ENCODE measurements at regions of chr1 and their contacts with region 1.

Region 1: DNA sequence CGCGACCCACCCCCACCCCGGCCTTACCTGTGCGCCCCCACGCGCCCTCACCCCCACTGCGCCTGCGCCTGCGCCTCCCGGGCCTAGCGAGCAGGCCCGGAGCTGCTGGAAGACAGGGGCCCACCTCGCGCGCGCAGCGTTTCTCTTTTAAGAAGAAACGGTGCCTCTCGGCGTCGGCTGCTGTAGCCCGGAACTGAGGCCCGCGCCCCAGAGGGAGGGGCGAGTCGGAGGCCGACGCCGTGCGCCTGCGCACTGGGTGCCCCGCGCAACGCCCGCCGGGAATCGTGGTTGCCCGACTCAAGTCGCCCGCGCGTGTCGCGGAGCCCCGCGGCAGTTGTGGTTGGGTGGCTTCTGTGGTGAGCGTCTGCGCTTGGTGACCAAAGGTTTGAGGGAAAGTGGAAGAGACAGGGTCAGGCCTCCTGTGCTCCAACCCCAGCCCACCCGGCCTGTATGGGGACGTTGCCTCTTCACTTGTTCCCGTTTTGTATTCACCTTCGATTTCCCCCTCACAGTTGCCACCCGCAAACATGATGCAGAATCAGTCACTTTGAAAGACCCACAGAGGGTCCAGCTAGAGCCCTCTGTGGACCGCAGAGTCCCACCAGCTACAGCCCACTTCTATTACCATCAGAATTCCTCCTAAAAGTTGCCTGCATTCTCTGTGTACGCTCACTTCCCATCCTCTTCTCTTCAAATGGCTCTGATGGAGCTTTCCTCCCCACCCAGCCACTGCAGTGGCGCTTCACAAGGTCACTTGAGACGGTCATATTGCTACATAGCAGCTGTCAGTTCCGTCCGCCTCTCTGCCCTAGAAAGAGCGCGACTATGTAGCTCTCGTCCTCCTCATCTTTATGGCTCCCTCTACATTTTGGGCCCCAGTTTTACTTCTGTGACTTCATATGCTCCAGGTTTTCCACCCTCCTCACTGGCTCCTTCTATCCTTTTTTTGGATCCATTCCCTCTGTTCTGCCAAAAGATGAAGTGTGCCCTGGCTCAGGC is at the start of gene ZNF692:
- DNase-seq: peak; percentile 97
- H3K4me3 ChIP-seq: peak within 1 kb of the TSS; percentile 71
- H3K4me3 Mint-ChIP-seq: peak within 1 kb of the TSS; percentile 91
- H3K27ac Mint-ChIP-seq: peak within 1 kb of the TSS; percentile 87
- H3K4me1 ChIP-seq: peaks cover 25% of the 10 kb centered on the region
- H3K4me1 Mint-ChIP-seq: peaks cover 16% of the 10 kb centered on the region
- H3K27me3 ChIP-seq: no peaks in the 10 kb centered on the region
- H3K27me3 Mint-ChIP-seq: no peaks in the 10 kb centered on the region
- CTCF ChIP-seq: no peak
- total RNA-seq, gene ZNF692: 48.5 and 58.4 TPM in 2 replicates

Region 2: DNA sequence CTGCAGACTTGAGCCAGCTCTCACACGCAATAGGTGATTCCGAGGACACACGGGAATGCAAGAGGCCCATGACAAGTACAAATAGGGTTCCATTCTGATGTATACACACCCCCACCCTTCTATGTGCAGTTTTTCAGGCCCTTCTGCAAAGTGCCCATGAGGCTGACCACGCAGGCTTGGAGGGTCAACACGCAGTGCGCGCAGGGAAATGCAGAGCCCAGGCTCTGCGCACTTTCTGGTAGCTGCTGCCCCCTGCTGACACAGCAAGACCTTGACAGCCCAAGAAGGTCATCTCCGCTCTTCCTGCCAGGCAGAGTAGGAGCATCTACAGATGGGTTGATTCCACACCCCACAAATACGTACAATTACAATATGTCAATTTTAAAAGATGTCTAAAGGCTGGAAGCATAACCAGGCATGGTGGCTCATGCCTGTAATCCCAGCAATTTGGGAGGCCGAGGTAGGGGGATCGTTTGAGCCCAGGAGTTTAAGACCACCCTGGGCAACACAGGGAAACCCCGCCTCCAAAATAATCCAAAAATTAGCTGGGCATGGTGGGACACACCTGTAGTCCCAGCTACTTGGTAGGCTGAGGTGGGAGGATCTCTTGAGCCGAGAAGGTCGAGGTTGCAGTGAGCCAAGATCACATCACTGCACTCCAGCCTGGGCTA is 52.0 kb before region 1 on chr1:
- CTCF ChIA-PET with region 1: no interaction called
- POLR2A ChIA-PET with region 1: no interaction called
- intact Hi-C with region 1: no loop called
- DNase-seq: peak; percentile 64 to 65
- H3K4me3 ChIP-seq: no peak overlapping the region
- H3K4me3 Mint-ChIP-seq: no peak overlapping the region
- H3K27ac Mint-ChIP-seq: no peak overlapping the region
- H3K4me1 ChIP-seq: no peaks in the 10 kb centered on the region
- H3K4me1 Mint-ChIP-seq: peaks cover 7% of the 10 kb centered on the region
- H3K27me3 ChIP-seq: no peaks in the 10 kb centered on the region
- H3K27me3 Mint-ChIP-seq: no peaks in the 10 kb centered on the region
- CTCF ChIP-seq: peak; percentile 72 to 82

Region 3: GRCh38 chr1:248849152-248849551 is 10.0 kb before region 1 on chr1:
- CTCF ChIA-PET with region 1: no interaction called
- POLR2A ChIA-PET with region 1: no interaction called
- intact Hi-C with region 1: no loop called
- DNase-seq: no peak
- H3K4me3 ChIP-seq: no peak overlapping the region
- H3K4me3 Mint-ChIP-seq: no peak overlapping the region
- H3K27ac Mint-ChIP-seq: no peak overlapping the region
- H3K4me1 ChIP-seq: no peaks in the 10 kb centered on the region
- H3K4me1 Mint-ChIP-seq: no peaks in the 10 kb centered on the region
- H3K27me3 ChIP-seq: no peaks in the 10 kb centered on the region
- H3K27me3 Mint-ChIP-seq: no peaks in the 10 kb centered on the region
- CTCF ChIP-seq: no peak

Region 4: GRCh38 chr1:248873409-248873992 is 14.3 kb after region 1 on chr1:
- CTCF ChIA-PET with region 1: interaction called, 19 read pairs
- POLR2A ChIA-PET with region 1: interaction called, 5 read pairs
- intact Hi-C with region 1: loop called (anchors 1 kb)
- DNase-seq: peak; percentile 95 to 97
- H3K4me3 ChIP-seq: peak overlapping the region; percentile 40
- H3K4me3 Mint-ChIP-seq: peak overlapping the region; percentile 98
- H3K27ac Mint-ChIP-seq: peak overlapping the region; percentile 95
- H3K4me1 ChIP-seq: peaks cover 6% of the 10 kb centered on the region; the same call in 1 of the 2 replicates
- H3K4me1 Mint-ChIP-seq: peaks cover 25% of the 10 kb centered on the region
- H3K27me3 ChIP-seq: no peaks in the 10 kb centered on the region
- H3K27me3 Mint-ChIP-seq: peaks cover 4% of the 10 kb centered on the region
- CTCF ChIP-seq: no peak

Measured in Caco-2 (cell line).